Testis (tissue), 5 donors: ENCODE measurements at regions of chr17 and their contacts with region 1.

Region 1: GRCh38 chr17:55238179-55238930 is 26.4 kb upstream of the HLF start:
- DNase-seq: peak; percentile 98
- H3K4me3 ChIP-seq: peak overlapping the region; percentile 50 to 64
- H3K27ac ChIP-seq: peak overlapping the region; percentile 76 to 78
- H3K4me1 ChIP-seq: peaks cover 18% of the 10 kb centered on the region
- H3K27me3 ChIP-seq: no peaks in the 10 kb centered on the region
- CTCF ChIP-seq: peak in 2 of 3 experiments; percentile 27 to 44
- POLR2A ChIP-seq: no peak

Region 2: DNA sequence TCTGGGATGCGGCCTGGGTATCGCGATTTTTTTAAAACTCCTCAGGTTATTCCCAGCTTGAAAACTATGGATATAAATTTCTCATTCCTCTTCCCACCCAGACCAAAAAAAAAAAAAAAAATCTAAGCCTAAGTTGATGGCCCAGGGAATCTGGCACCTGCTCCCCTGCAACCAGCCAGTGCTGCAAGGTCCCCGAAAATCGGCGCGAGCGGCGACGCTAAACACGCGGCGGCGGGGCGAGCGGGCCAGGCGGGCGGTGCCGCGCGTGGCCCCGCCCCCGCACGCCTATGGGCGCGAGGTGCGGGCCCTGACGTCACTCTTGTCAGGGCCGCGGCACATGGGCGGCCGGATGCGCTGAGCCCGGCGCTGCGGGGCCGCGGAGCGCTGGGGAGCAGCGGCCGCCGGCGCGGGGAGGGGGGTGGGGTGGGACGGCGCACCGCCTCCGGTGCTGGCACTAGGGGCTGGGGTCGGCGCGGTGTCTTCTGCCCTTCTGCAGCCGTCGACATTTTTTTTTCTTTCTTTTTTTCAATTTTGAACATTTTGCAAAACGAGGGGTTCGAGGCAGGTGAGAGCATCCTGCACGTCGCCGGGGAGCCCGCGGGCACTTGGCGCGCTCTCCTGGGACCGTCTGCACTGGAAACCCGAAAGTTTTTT is 26.4 kb after region 1 on chr17 and contains the start of gene HLF:
- intact Hi-C with region 1: loop called (anchors 2 kb)
- DNase-seq: peak; percentile 88
- H3K4me3 ChIP-seq: peak within 1 kb of the TSS; percentile 66 to 74
- H3K27ac ChIP-seq: peak within 1 kb of the TSS; percentile 89 to 92
- H3K4me1 ChIP-seq: peaks cover 9% of the 10 kb centered on the region
- H3K27me3 ChIP-seq: no peaks in the 10 kb centered on the region
- CTCF ChIP-seq: no peak
- POLR2A ChIP-seq: no peak
- total RNA-seq, gene HLF: 14.5 to 23.4 TPM